CD4-positive, alpha-beta T cell (primary cell): ENCODE measurements at regions of chr1 and their contacts with region 1.

Region 1: DNA sequence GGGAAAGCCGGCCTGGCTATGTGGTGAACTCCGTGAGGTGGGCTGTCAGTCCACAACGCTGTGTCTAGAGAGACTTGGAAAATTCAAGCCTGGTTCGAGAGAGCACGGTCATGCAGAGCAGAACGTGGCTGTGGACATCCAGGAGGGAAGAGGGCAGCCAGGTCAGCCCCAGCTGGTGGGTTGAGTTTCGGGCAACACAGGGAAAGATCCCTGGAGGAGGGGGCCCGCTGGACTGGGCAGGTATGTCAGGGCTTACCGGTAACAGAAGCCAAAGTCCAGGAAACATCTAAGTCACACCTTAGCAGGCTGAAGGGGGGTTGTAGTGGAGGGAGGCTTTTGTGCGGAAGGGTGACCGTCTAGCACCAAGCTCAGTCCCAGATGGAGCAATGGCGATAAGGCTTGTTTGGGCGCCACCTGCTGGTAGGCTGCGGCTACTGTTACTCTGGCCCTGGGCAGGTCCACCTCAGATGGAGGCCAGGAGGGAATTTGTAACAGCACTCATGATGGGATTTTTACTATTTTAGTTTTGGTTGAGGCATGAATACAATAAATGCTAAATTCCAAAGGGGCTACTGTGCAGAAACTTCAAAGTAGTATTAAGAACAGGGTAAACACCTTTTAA is 143.3 kb upstream of the ZNF644 start:
- DNase-seq: peak; percentile 30 to 75 (median 57)
- ATAC-seq: no peak
- H3K4me3 ChIP-seq: no peak overlapping the region
- H3K4me3 Mint-ChIP-seq: no peak overlapping the region
- H3K27ac ChIP-seq: no peak overlapping the region
- H3K27ac Mint-ChIP-seq: no peak overlapping the region
- H3K4me1 ChIP-seq: peaks cover 4% of the 10 kb centered on the region
- H3K4me1 Mint-ChIP-seq: peaks cover 8% of the 10 kb centered on the region
- H3K27me3 ChIP-seq: no peaks in the 10 kb centered on the region
- H3K27me3 Mint-ChIP-seq: no peaks in the 10 kb centered on the region
- CTCF ChIP-seq: peak; percentile 92

Region 2: DNA sequence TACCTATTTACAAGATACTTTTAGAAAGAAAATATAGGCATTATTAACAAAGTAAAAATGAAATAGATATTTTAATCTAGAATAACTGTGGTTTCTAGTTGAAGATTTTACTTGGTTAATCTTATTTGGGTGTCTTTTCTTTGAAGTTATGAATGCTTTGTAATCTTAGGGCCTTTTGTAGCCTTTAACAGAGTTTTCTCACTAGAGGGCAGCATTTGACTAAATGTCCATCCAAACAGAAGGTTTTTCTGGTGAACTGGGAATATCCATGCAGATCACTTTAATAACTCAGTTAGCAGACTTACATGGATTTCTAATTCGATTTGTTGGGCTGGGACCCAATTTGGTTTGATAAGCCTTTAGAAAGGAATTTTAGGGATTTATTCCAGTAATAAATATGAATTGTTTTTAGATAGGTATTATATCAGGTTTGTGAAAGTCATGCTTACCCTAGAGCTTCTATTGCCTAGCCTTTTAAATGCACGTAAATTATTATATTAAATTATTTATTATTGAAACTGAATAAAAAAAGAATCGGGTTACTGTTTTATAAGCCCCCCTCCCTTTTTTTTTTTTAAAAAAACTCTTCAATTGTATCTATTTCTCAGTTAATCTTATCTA is 1050.5 kb before region 1 on chr1:
- CTCF ChIA-PET with region 1: no interaction called
- POLR2A ChIA-PET with region 1: no interaction called
- intact Hi-C with region 1: loop called in 1 of 2 experiments (anchors 5 kb)
- DNase-seq: peak in 3 of 14 experiments; percentile 11 to 24 (median 17)
- ATAC-seq: no peak
- H3K4me3 ChIP-seq: no peak overlapping the region
- H3K4me3 Mint-ChIP-seq: no peak overlapping the region
- H3K27ac ChIP-seq: no peak overlapping the region
- H3K27ac Mint-ChIP-seq: no peak overlapping the region
- H3K4me1 ChIP-seq: no peaks in the 10 kb centered on the region
- H3K4me1 Mint-ChIP-seq: no peaks in the 10 kb centered on the region
- H3K27me3 ChIP-seq: peaks cover 0 to 8% of the 10 kb centered on the region in 2 experiments
- H3K27me3 Mint-ChIP-seq: peaks cover 41% of the 10 kb centered on the region
- CTCF ChIP-seq: peak; percentile 58

Region 3: GRCh38 chr1:90579212-90579802 is 585.8 kb before region 1 on chr1:
- CTCF ChIA-PET with region 1: no interaction called
- POLR2A ChIA-PET with region 1: no interaction called
- intact Hi-C with region 1: loop called (anchors 2 to 5 kb)
- DNase-seq: peak in 3 of 14 experiments; percentile 43 to 49 (median 49)
- ATAC-seq: no peak
- H3K4me3 ChIP-seq: no peak overlapping the region
- H3K4me3 Mint-ChIP-seq: no peak overlapping the region
- H3K27ac ChIP-seq: no peak overlapping the region
- H3K27ac Mint-ChIP-seq: no peak overlapping the region
- H3K4me1 ChIP-seq: no peaks in the 10 kb centered on the region
- H3K4me1 Mint-ChIP-seq: no peaks in the 10 kb centered on the region
- H3K27me3 ChIP-seq: peaks cover 0 to 4% of the 10 kb centered on the region in 2 experiments
- H3K27me3 Mint-ChIP-seq: peaks cover 8% of the 10 kb centered on the region
- CTCF ChIP-seq: peak; percentile 71

Region 4: GRCh38 chr1:91124989-91125417 is 40.1 kb before region 1 on chr1:
- CTCF ChIA-PET with region 1: no interaction called
- POLR2A ChIA-PET with region 1: no interaction called
- intact Hi-C with region 1: no loop called
- DNase-seq: peak in 4 of 14 experiments; percentile 5 to 51 (median 10)
- ATAC-seq: no peak
- H3K4me3 ChIP-seq: no peak overlapping the region
- H3K4me3 Mint-ChIP-seq: no peak overlapping the region
- H3K27ac ChIP-seq: no peak overlapping the region
- H3K27ac Mint-ChIP-seq: no peak overlapping the region
- H3K4me1 ChIP-seq: no peaks in the 10 kb centered on the region
- H3K4me1 Mint-ChIP-seq: no peaks in the 10 kb centered on the region
- H3K27me3 ChIP-seq: peaks cover 0 to 3% of the 10 kb centered on the region in 2 experiments
- H3K27me3 Mint-ChIP-seq: no peaks in the 10 kb centered on the region
- CTCF ChIP-seq: no peak

Region 5: GRCh38 chr1:91924146-91924545 is 759.0 kb after region 1 on chr1:
- CTCF ChIA-PET with region 1: no interaction called
- POLR2A ChIA-PET with region 1: no interaction called
- intact Hi-C with region 1: loop called in 1 of 2 experiments (anchors 2 kb)
- DNase-seq: no peak
- ATAC-seq: no peak
- H3K4me3 ChIP-seq: no peak overlapping the region
- H3K4me3 Mint-ChIP-seq: no peak overlapping the region
- H3K27ac ChIP-seq: no peak overlapping the region
- H3K27ac Mint-ChIP-seq: no peak overlapping the region
- H3K4me1 ChIP-seq: no peaks in the 10 kb centered on the region
- H3K4me1 Mint-ChIP-seq: no peaks in the 10 kb centered on the region
- H3K27me3 ChIP-seq: no peaks in the 10 kb centered on the region
- H3K27me3 Mint-ChIP-seq: no peaks in the 10 kb centered on the region
- CTCF ChIP-seq: no peak